Gastrocnemius medialis (tissue), 4 donors: ENCODE measurements at regions of chr4 and their contacts with region 1.

Region 1: DNA sequence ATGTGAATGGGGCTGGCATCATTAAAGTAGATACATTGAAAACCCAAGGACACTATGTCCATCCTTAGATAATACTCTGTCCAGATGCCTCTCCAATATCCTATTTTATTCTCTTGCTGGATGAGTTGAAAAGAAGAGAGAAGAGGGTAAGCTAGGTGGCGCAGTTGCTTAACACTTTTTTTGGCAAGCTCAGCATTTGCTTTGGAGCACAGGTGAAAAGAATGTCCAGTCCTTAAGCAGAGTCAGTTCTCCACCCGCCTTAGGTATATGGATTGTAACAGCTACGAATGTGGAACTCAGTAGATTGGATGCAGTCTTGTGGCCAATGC is 208.4 kb downstream of the NWD2 start:
- DNase-seq: no peak
- ATAC-seq: peak; percentile 74 to 87
- H3K4me3 ChIP-seq: peak overlapping the region; percentile 45 to 69 (median 56)
- H3K27ac ChIP-seq: no peak overlapping the region
- H3K4me1 ChIP-seq: peaks cover 8 to 12% of the 10 kb centered on the region in 2 donors
- H3K27me3 ChIP-seq: peaks cover 15 to 36% (median 17%) of the 10 kb centered on the region in 3 donors
- CTCF ChIP-seq: peak in 2 of 5 experiments; percentile 11 to 36
- POLR2A ChIP-seq: no peak

Region 2: DNA sequence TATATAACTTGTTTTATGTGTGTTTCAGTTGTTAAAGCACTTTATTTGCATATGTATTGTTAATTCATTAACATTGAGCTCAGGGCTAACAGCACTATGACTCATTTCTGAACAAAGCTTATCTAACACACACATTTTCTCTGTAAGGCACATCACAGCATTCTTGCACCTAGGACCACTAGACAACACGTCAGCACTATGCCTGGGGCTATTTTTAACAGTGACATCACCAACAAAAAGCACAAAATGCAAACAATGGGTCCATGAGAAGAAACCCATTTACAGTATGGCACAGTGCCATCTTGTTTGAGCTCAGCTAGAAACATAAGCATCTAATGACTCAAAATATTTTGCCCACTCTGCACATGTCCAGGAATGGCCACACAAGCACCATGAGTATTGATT is 108.9 kb after region 1 on chr4:
- in situ Hi-C with region 1: loop called in 1 of 4 experiments (anchors 10 kb)
- intact Hi-C with region 1: loop called (anchors 1 kb)
- DNase-seq: no peak
- ATAC-seq: no peak
- H3K4me3 ChIP-seq: no peak overlapping the region
- H3K27ac ChIP-seq: no peak overlapping the region
- H3K4me1 ChIP-seq: no peaks in the 10 kb centered on the region
- H3K27me3 ChIP-seq: no peaks in the 10 kb centered on the region
- CTCF ChIP-seq: no peak
- POLR2A ChIP-seq: no peak

Region 3: DNA sequence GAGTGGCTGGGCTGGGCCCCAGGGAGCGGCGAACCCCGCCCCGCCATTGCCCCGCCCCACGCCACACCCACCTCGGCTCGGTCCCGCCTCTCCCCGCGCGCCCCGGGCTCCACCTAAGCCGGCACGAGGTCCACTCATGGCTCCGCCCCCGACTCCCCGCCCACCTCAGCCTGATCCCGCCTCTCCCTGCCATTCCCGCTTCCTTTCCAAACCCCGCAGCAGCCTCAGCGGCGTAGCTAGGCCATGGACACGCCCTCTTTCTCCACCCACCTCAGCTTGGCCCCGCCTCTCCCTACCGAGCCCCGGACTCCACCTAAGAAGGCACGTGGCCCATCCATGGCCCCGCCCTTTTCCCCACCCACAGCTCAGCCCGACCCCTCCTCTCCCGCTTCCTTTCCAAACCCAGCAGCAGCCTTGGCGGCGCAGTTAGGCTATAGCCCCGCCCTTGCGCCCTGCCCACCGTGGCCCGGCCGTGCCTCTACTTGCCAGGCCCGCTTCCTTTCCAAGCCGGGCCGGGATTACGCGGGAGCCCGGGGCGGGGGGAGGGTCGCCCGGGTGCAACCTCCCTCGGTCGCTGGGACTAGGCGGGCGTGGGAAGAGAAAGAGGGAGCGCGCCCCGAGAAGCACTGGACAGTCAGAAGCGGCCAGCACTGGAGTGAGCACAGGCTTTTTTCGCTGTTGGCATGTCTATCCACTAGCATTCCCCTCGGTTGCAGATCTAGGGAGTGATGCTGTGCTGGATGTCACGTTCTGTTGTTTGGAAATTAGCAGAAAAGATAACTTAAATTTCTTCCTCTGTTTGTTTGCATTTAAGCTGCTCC is 233.7 kb after region 1 on chr4 and contains the start of gene RELL1:
- in situ Hi-C with region 1: no loop called
- intact Hi-C with region 1: no loop called
- DNase-seq: peak; percentile 100
- ATAC-seq: peak; percentile 88 to 89
- H3K4me3 ChIP-seq: peak within 1 kb of the TSS; percentile 74 to 88 (median 82)
- H3K27ac ChIP-seq: peak within 1 kb of the TSS; percentile 96 to 100 (median 98)
- H3K4me1 ChIP-seq: peaks cover 28 to 35% of the 10 kb centered on the region in 2 donors
- H3K27me3 ChIP-seq: no peaks in the 10 kb centered on the region
- CTCF ChIP-seq: no peak
- POLR2A ChIP-seq: no peak
- total RNA-seq, gene RELL1: 13.7 to 36.3 (median 27.8) TPM